ENCODE measurements at regions of chr6 and their contacts with region 1.

Region 1: DNA sequence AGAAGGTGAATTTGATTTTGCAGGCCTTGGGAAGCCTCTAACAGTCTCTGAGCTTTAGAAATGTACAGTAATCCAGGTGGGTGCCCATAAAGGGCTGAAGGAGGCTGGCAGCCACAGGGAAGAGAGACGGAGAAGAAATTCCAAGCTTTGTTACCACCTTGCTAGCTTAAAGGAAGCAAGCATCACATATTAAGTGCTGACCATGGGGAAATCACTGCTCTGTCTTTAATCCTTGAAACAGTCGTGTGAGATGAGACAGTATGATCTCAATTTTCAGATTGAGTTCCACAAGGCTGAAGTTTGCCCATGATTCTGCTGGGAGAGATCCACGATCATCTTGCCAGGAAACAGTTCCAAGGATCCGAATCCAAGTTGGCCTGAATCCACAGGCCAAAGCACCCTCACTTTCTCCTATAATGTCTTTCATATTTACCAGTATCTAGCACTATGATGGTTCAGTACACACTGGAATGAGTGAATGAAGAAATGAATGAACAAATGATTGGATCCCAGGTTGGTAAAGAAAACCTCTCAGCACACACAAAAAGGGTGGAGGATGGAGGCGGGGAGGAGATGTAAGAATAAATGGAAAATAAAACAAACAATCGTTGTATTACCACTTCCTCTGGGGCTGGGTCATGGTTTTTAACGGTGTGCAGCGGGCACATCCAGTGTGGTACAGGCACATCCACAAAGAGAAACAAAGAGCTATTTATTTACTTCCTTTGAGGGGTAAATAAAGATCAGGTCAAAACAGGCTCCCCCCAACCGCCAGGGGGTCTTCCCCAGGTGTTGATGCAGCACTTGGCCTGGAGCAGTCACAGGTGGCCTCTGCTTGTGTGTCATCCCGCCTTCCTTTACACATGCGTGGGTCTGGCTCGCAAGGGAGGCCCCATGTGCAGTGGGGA is 28.2 kb upstream of the TAF8 start:
- DNase-seq: peak; percentile 80
- H3K4me3 Mint-ChIP-seq: peak overlapping the region; percentile 65
- H3K27ac Mint-ChIP-seq: peak overlapping the region; percentile 95
- H3K4me1 Mint-ChIP-seq: peaks cover 74% of the 10 kb centered on the region
- H3K27me3 Mint-ChIP-seq: no peaks in the 10 kb centered on the region

Region 2: GRCh38 chr6:41705996-41706835 is 315.9 kb before region 1 on chr6:
- CTCF ChIA-PET with region 1: no interaction called
- POLR2A ChIA-PET with region 1: no interaction called
- DNase-seq: peak; percentile 81
- H3K4me3 Mint-ChIP-seq: peak overlapping the region; percentile 30
- H3K27ac Mint-ChIP-seq: peak overlapping the region; percentile 76
- H3K4me1 Mint-ChIP-seq: peaks cover 37% of the 10 kb centered on the region
- H3K27me3 Mint-ChIP-seq: no peaks in the 10 kb centered on the region

Region 3: DNA sequence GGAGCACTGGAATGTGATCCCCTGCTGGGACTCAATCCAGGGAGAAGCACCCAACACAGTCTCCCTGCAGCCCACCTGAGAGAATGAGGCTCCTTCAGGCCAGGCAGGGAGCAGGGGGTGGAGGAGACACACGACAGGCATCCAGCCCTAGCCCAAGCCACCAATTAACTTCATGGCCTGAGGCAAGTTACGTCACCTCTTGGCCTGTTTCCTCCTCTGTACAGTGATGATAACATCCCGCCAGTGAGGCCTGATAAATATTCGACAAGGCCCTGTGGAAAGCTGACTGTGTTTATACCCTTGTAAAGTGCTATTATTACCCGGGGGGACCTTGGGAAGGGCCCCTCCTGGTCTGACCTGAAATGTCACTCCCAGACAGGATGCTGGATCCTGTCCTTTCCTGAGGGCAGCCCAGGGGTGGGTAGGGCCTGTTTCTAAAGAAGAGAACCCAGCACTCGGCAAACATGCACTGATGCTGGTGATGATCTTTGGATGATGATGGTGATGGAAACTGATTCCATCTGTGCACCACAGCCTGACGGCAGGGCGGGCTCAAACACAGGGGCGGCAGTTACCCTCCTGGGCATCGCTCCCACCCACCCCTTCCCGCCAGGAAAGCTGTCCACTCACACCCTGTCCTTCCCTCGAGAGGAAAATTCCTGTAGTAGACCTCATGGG is 254.8 kb before region 1 on chr6:
- CTCF ChIA-PET with region 1: no interaction called
- POLR2A ChIA-PET with region 1: no interaction called
- DNase-seq: no peak
- H3K4me3 Mint-ChIP-seq: no peak overlapping the region
- H3K27ac Mint-ChIP-seq: no peak overlapping the region
- H3K4me1 Mint-ChIP-seq: peaks cover 12% of the 10 kb centered on the region
- H3K27me3 Mint-ChIP-seq: peaks cover 1% of the 10 kb centered on the region

Region 4: DNA sequence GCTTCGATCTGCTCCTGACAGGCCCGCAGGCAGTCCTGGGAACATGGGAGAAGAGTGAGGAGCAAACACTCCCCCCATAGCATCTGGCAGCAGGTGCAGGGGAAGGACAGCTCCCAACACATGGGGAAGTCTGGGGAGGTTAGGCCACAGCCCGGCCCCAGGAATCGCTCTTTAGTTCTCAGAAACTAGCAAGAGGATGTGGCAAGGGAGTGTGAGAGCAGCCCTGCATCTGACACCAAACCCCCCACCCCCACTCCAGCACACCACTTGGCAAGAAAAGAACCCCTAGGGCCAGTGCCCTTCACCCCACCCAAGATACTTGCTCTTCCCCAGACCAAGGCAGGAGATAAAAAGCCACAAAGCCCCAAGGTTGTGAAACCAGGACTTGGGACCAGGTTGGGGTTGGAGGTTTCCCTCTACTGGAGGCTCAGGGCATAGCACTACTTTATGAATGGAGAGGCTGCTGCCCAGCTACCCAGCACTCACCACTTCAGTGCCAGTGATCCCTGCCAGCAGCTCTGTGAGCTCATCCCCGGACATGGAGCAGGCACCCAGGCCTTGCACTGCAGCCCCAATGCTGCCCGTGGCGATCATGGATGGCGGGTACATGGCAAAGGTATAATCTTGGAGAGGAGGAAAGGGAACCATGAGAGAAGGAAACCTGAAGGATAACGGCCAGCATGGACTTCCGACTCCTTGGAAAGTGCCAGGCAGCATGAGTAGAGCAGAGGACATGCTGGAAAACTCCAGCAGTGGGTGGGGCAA is 85.8 kb before region 1 on chr6:
- CTCF ChIA-PET with region 1: interaction called, 11 read pairs
- POLR2A ChIA-PET with region 1: interaction called, 81 read pairs
- DNase-seq: peak; percentile 95
- H3K4me3 Mint-ChIP-seq: peak overlapping the region; percentile 100
- H3K27ac Mint-ChIP-seq: peak overlapping the region; percentile 93
- H3K4me1 Mint-ChIP-seq: peaks cover 66% of the 10 kb centered on the region
- H3K27me3 Mint-ChIP-seq: no peaks in the 10 kb centered on the region

Region 5: GRCh38 chr6:42009966-42010891 is 11.9 kb before region 1 on chr6:
- CTCF ChIA-PET with region 1: interaction called, 5 read pairs
- POLR2A ChIA-PET with region 1: interaction called, 12 read pairs
- DNase-seq: peak; percentile 33
- H3K4me3 Mint-ChIP-seq: peak overlapping the region; percentile 43
- H3K27ac Mint-ChIP-seq: peak overlapping the region; percentile 82
- H3K4me1 Mint-ChIP-seq: peaks cover 67% of the 10 kb centered on the region
- H3K27me3 Mint-ChIP-seq: no peaks in the 10 kb centered on the region

Region 6: DNA sequence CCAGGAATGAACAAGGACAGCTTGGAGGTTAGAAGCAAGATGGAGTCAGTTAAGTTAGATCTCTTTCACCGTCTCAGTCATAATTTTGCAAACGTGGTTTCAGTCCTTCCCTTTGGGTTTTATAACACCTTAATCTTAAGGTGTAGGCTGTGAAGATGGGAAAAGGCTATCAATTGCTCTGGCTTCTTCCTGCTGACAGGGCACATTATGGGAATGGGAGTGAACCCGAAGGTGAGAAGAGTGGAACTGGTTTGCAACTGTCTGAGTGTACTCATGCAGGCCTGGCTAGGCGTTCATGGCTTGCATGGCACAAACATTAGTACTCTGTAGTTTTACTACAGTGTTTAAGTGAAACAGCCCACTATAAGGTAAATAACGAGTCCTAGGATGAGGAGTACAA is 37.6 kb after region 1 on chr6:
- CTCF ChIA-PET with region 1: no interaction called
- POLR2A ChIA-PET with region 1: no interaction called
- DNase-seq: no peak
- H3K4me3 Mint-ChIP-seq: no peak overlapping the region
- H3K27ac Mint-ChIP-seq: no peak overlapping the region
- H3K4me1 Mint-ChIP-seq: peaks cover 3% of the 10 kb centered on the region
- H3K27me3 Mint-ChIP-seq: no peaks in the 10 kb centered on the region

Region 7: GRCh38 chr6:42075159-42075838 is 53.2 kb after region 1 on chr6:
- CTCF ChIA-PET with region 1: no interaction called
- POLR2A ChIA-PET with region 1: no interaction called
- DNase-seq: peak; percentile 69
- H3K4me3 Mint-ChIP-seq: no peak overlapping the region
- H3K27ac Mint-ChIP-seq: no peak overlapping the region
- H3K4me1 Mint-ChIP-seq: peaks cover 18% of the 10 kb centered on the region
- H3K27me3 Mint-ChIP-seq: no peaks in the 10 kb centered on the region

Measured in activated CD4-positive, alpha-beta memory T cell treated with anti-CD3 and anti-CD28 coated beads, Interleukin-2, amount 10 ng/mL, durations not matched to agents 7 days and 5 days (primary cell).